IMR-90 (cell line): ENCODE measurements at regions of chr17 and their contacts with region 1.

Region 1: DNA sequence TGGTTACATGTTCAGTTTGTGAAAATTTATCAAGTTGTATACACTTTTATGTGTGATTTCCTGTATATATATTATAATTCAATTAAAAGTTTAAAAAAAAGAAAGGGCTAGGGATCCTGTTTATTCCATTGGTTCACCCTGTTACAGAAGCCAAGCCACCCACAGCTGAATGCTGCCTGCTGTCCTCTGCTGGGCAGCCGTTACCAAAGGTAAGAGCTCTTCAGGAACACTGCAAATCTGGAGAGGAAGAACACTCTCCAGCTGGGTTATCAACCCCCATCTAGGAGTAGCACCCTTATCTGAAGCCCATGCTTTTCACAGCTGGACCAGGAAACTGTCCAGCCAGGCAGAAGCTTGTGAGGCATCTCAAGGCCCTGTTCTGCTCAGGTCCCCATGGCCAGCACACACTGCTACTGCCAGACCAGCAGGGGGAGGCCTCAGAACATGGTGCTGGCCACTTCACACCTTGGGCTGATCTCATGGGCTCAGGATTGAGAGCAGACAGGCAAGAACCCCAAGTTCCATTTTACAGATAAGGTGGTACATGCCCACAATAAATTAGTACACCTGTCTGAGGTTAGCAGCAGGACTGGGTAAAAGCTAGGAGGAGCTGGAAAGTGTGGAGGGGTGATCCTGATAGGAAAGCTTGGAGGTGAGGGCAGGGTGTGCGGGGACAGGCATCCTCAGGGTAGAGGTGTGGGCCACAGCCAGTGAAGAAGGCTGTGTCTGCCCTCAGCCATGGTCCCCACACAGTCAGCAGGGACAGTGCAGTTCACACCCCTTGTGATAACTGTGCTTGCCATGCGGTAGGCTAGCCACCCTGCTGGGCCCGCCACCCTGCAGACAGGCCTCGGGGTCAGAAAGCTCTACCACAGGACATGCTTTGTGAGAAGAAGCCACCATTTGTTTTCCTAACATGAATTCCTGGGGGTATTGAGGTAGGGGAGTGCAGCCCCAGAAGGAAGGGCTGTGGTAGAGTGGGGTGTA is 54.3 kb upstream of the SREBF1 start:
- DNase-seq: peak; percentile 72
- ATAC-seq: peak; percentile 95
- H3K4me3 ChIP-seq: no peak overlapping the region
- H3K27ac ChIP-seq: no peak overlapping the region
- H3K4me1 ChIP-seq: peaks cover 4% of the 10 kb centered on the region; the same call in 1 of the 2 replicates
- H3K27me3 ChIP-seq: no peaks in the 10 kb centered on the region
- CTCF ChIP-seq: peak; percentile 83
- POLR2A ChIP-seq: no peak
- RAD21 ChIP-seq: peak; percentile 94

Region 2: DNA sequence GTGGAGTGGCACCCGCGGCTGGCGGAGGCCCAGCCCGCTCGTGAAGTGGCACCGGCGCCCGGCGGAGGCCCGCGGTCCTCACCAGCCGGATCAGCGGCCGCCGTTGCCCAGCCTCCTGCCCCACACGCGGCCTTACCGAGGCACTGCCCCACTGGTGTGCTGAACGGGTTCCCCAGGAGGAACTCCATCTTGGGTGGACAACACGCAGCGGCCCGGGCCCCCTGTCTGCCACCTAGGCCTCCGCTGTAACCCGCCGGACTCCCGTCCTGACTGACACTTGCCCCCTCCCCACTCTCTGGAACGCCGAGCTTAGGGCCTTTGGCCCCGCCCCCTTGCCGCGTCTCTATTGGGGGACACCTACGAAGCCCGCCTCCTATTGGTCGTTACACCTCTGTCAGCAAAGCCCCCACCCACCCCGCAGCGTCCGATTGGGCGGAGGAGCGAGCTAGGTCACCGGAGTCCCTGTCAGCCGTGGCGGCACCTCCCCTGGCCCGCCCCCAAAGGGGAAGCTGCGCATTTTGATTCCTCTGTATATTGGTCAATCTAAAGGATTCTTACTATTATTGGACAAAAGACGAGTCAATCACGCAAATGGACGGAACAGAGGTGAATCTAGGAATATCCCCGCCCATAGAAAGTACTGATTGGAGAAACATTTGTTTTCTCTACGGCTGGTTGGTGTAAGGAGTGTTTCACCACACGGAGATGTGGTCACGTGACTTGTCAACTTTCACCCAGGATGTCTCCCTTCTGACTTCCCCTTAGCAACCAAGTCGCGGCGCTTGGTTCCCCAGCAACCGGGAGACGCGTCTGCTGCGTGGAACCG is 81.3 kb after region 1 on chr17 and contains the starts of genes DRC3 and TOM1L2:
- CTCF ChIA-PET with region 1: no interaction called
- POLR2A ChIA-PET with region 1: no interaction called
- dilution Hi-C with region 1: no loop called
- in situ Hi-C with region 1: no loop called
- intact Hi-C with region 1: loop called (anchors 1 kb)
- DNase-seq: peak; percentile 100
- ATAC-seq: peak; percentile 96
- H3K4me3 ChIP-seq: peak within 1 kb of the TSS; percentile 66
- H3K27ac ChIP-seq: peak within 1 kb of the TSS; percentile 36
- H3K4me1 ChIP-seq: peaks cover 9% of the 10 kb centered on the region
- H3K27me3 ChIP-seq: no peaks in the 10 kb centered on the region
- CTCF ChIP-seq: no peak
- POLR2A ChIP-seq: peak; percentile 82
- RAD21 ChIP-seq: peak; percentile 18; the same call in 1 of the 2 replicates
- total RNA-seq, gene DRC3: 0.28 and 0.72 TPM in 2 replicates
- total RNA-seq, gene TOM1L2: 23.3 and 34.4 TPM in 2 replicates